ENCODE measurements at regions of chr1 and their contacts with region 1.

Region 1: GRCh38 chr1:174097426-174097825 is 61.9 kb upstream of the RABGAP1L start:
- DNase-seq: no peak
- H3K4me3 ChIP-seq: no peak overlapping the region
- H3K27ac ChIP-seq: no peak overlapping the region
- H3K4me1 ChIP-seq: no peaks in the 10 kb centered on the region
- H3K27me3 ChIP-seq: no peaks in the 10 kb centered on the region
- CTCF ChIP-seq: no peak

Region 2: DNA sequence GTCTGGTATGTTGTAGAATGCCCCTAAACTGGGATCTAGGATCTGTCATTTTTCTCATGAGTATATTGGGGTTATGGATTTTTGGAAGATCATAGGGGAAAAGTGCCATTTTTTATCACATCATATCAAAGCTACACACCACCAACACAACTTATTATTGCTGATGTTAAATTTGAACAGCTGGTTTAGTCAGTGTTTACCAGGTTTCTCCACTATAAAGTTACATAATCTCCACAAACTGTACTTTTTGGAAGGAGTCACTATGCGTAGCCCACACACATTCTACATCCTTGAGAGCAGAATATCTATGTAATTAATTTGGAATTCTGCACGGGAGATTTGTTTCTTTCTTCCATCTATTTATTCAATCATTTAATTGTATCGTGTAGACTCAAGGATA is 110.5 kb before region 1 on chr1:
- CTCF ChIA-PET with region 1: no interaction called
- POLR2A ChIA-PET with region 1: no interaction called
- intact Hi-C with region 1: no loop called
- DNase-seq: no peak
- H3K4me3 ChIP-seq: no peak overlapping the region
- H3K27ac ChIP-seq: no peak overlapping the region
- H3K4me1 ChIP-seq: no peaks in the 10 kb centered on the region
- H3K27me3 ChIP-seq: no peaks in the 10 kb centered on the region
- CTCF ChIP-seq: no peak

Region 3: DNA sequence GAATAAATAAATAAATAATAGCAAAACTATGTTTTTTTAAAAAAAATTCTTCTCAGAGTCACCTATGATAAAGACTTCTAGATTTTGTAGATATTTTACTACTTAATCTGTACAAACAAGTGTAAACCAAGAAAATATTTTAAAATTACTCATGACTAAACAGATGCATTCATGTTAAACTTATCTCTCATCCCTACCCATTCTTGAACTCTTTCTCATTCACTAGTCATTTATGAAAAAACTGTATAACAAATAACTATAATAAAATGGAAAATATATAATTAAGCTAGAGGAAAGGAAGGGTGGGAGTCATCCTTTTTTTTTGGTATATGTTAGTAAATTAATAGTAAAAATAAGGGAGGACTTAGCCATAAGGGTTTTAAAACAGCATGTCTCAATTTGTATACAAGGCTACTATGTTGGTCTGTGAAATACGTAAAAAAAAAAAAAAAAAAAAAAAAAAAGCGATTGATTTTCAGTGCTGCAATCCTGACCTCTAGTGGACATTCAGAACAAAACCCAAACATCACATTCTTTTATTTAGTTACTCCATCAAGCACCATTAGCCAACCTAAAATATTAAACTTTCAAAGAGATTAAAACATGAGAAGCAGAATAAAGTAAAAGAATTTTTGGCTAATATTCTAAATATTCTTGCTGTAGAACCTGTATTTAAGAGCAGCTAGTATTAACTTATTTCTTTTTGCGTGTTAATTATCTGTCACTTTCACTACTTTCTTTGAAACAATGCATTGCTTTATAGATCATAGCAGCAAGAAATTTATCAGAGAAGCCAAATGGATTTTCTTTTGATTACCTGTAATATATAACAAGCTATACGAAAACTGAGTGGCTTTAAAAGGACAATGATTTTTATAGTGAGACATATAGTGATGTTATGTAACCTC is 646.5 kb after region 1 on chr1:
- CTCF ChIA-PET with region 1: no interaction called
- POLR2A ChIA-PET with region 1: no interaction called
- intact Hi-C with region 1: loop called (anchors 10 kb)
- DNase-seq: peak; percentile 60
- H3K4me3 ChIP-seq: no peak overlapping the region
- H3K27ac ChIP-seq: no peak overlapping the region
- H3K4me1 ChIP-seq: no peaks in the 10 kb centered on the region
- H3K27me3 ChIP-seq: no peaks in the 10 kb centered on the region
- CTCF ChIP-seq: peak; percentile 74